K562 (cell line): ENCODE measurements at regions of chr18 and their contacts with region 1.

Region 1: GRCh38 chr18:13120983-13121441 is 97.5 kb upstream of the LDLRAD4 start:
- DNase-seq: no peak
- ATAC-seq: no peak
- H3K4me3 ChIP-seq: no peak overlapping the region
- H3K27ac ChIP-seq: no peak overlapping the region
- H3K4me1 ChIP-seq: no peaks in the 10 kb centered on the region
- H3K27me3 ChIP-seq: no peaks in the 10 kb centered on the region
- CTCF ChIP-seq: no peak
- EP300 ChIP-seq: no peak
- POLR2A ChIP-seq: no peak
- RAD21 ChIP-seq: no peak

Region 2: GRCh38 chr18:12420831-12421421 is 700.1 kb before region 1 on chr18:
- CTCF ChIA-PET with region 1: no interaction called
- POLR2A ChIA-PET with region 1: no interaction called
- in situ Hi-C with region 1: no loop called
- intact Hi-C with region 1: no loop called
- DNase-seq: no peak
- ATAC-seq: no peak
- H3K4me3 ChIP-seq: no peak overlapping the region
- H3K27ac ChIP-seq: no peak overlapping the region
- H3K4me1 ChIP-seq: peaks cover 0 to 3% of the 10 kb centered on the region in 2 experiments; a peak in 2 of 5 replicates
- H3K27me3 ChIP-seq: no peaks in the 10 kb centered on the region
- CTCF ChIP-seq: no peak
- EP300 ChIP-seq: no peak
- POLR2A ChIP-seq: no peak
- RAD21 ChIP-seq: no peak

Region 3: DNA sequence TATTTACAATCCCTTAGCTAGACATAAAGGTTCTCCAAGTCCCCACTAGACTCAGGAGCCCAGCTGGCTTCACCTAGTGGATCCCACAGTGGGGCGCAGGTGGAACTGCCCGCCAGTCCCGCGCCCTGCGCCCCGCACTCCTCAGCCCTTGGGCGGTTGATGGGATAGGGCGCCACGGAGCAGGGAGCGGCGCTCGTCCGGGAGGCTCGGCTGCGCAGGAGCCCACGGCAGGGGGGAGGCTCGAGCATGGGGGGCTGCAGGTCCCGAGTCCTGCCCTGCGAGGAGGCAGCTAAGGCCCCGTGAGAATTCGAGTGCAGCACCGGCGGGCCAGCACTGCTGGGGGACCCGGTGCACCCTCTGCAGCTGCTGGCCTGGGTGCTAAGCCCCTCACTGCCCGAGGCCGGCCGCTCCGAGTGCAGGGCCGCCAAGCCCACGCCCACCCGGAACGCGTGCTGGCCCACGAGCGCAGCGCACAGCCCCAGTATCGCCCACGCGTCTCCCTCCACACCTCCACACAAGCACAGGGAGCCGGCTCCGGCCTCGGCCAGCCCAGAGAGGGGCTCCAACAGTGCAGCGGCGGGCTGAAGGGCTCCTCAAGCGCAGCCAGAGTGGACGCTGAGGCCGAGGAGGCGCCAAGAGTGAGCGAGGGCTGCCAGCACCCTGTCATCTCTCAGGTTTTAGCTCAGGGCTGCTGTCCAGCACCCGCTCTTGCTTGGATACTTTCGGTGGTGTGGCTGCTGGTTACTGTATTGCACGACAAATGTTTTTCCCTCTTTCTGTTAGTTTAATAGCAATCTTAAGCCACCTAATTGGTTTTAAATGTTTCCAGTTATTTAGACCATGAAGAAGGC is 13.8 kb after region 1 on chr18:
- CTCF ChIA-PET with region 1: no interaction called
- POLR2A ChIA-PET with region 1: interaction called, 15 read pairs
- in situ Hi-C with region 1: no loop called
- intact Hi-C with region 1: no loop called
- DNase-seq: no peak
- ATAC-seq: no peak
- H3K4me3 ChIP-seq: no peak overlapping the region
- H3K27ac ChIP-seq: no peak overlapping the region
- H3K4me1 ChIP-seq: peaks cover 0 to 15% of the 10 kb centered on the region in 2 experiments; a peak in 1 of 5 replicates
- H3K27me3 ChIP-seq: no peaks in the 10 kb centered on the region
- CTCF ChIP-seq: no peak
- EP300 ChIP-seq: no peak
- POLR2A ChIP-seq: no peak
- RAD21 ChIP-seq: no peak